HAP-1 (cell line): ENCODE measurements at regions of chr5 and their contacts with region 1.

Region 1: DNA sequence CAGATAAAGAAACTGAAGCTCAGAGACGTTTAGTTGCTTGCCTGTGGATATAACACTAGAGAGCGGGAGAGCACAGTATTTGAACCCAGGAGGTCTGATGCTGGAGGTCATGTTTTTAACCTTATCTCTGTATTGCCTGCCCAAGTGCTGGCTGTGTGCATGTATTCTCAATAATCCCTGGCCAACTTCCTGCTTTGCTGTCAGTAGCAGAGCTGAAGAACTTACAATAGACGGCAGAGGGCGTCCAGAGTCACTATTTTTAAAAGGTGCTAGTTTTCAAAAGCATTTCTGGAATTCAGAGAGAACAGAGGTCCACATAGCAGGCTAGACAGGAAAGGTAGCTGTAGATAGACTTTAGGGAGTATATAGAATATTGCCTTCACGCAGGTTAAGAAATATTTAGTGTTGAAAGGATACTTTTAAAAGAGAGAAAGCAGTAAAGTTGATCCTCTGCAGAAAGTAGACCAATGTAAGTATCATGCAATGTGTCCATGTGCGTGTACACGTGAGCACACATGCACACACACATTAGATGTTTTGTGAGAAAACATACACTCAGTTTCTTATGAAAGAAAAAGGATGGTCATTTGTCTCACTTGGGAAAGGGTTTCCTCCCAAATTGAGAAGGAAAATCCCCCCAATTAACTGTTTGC is 46.3 kb downstream of the PTCD2 start:
- DNase-seq: peak; percentile 72 to 78
- H3K4me3 ChIP-seq: no peak overlapping the region
- H3K4me1 ChIP-seq: peaks cover 7% of the 10 kb centered on the region
- H3K27me3 ChIP-seq: no peaks in the 10 kb centered on the region

Region 2: GRCh38 chr5:72510610-72511181 is 144.2 kb after region 1 on chr5:
- in situ Hi-C with region 1: no loop called
- DNase-seq: no peak
- H3K4me3 ChIP-seq: no peak overlapping the region
- H3K4me1 ChIP-seq: no peaks in the 10 kb centered on the region
- H3K27me3 ChIP-seq: no peaks in the 10 kb centered on the region

Region 3: DNA sequence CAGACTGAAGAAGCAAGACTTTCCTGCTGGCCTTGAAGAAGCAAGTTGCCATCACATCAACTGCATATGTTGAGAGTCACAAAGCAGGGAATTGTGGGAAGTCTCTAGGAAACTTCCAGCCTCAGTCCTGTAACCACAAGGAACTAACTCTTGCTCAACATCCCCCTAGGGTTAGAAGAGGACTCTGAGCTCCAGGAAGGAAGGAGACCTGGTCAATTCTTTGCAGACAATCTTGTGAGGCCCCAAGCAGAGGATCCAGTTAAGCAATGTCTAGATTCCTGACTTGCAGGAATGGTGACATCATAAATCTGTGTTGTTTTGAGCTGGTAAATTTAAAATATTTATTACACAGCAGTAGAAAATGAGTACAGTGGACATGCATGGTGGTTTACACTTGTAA is 159.4 kb after region 1 on chr5:
- in situ Hi-C with region 1: loop called (anchors 5 kb)
- DNase-seq: no peak
- H3K4me3 ChIP-seq: no peak overlapping the region
- H3K4me1 ChIP-seq: no peaks in the 10 kb centered on the region
- H3K27me3 ChIP-seq: no peaks in the 10 kb centered on the region

Region 4: GRCh38 chr5:72556351-72557166 is 190.1 kb after region 1 on chr5:
- in situ Hi-C with region 1: no loop called
- DNase-seq: peak in 1 of 2 experiments; percentile 17
- H3K4me3 ChIP-seq: no peak overlapping the region
- H3K4me1 ChIP-seq: no peaks in the 10 kb centered on the region
- H3K27me3 ChIP-seq: no peaks in the 10 kb centered on the region

Region 5: GRCh38 chr5:72644296-72644695 is 277.8 kb after region 1 on chr5:
- in situ Hi-C with region 1: no loop called
- DNase-seq: no peak
- H3K4me3 ChIP-seq: no peak overlapping the region
- H3K4me1 ChIP-seq: no peaks in the 10 kb centered on the region
- H3K27me3 ChIP-seq: no peaks in the 10 kb centered on the region

Region 6: GRCh38 chr5:72816311-72817145 is 450.1 kb after region 1 on chr5 and contains the start of gene TNPO1:
- in situ Hi-C with region 1: loop called (anchors 25 kb)
- DNase-seq: peak; percentile 88 to 94
- H3K4me3 ChIP-seq: peak within 1 kb of the TSS; percentile 60
- H3K4me1 ChIP-seq: peaks cover 27% of the 10 kb centered on the region
- H3K27me3 ChIP-seq: no peaks in the 10 kb centered on the region